A673 (cell line): ENCODE measurements at regions of chr21 and their contacts with region 1.

Region 1: GRCh38 chr21:42781971-42782722 is 97.2 kb downstream of the WDR4 start:
- DNase-seq: no peak
- H3K4me3 ChIP-seq: no peak overlapping the region
- H3K27ac ChIP-seq: no peak overlapping the region
- H3K4me1 ChIP-seq: peaks cover 8% of the 10 kb centered on the region
- H3K27me3 ChIP-seq: peaks cover 15% of the 10 kb centered on the region
- CTCF ChIP-seq: no peak

Region 2: DNA sequence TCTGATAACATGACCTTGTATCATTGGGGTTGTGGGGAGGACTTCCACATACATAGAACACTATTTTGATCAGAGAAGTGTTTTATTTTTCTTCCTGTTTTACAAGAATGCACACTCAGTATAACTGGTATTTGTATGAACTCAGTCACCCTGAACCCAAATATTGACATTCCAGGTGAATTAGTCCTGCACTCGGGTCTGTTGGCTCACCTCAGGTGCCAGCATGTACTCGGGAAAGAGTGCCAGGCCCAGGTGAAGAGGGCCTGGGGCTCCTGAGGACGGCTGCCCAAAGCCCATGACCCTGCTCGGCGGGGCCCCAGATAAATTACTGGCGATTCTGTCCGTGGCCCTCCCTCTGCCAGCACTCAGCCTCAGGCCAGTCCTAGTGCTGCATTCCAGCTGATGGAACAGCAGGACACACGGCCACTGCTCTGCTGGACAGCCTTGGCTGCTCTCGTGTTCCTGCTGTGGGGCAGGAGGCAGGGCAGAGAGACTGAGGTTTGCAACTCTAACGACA is 1198.8 kb before region 1 on chr21:
- CTCF ChIA-PET with region 1: no interaction called
- POLR2A ChIA-PET with region 1: no interaction called
- intact Hi-C with region 1: no loop called
- DNase-seq: no peak
- H3K4me3 ChIP-seq: no peak overlapping the region
- H3K27ac ChIP-seq: no peak overlapping the region
- H3K4me1 ChIP-seq: no peaks in the 10 kb centered on the region
- H3K27me3 ChIP-seq: no peaks in the 10 kb centered on the region
- CTCF ChIP-seq: no peak

Region 3: GRCh38 chr21:42537106-42537742 is 244.9 kb before region 1 on chr21:
- CTCF ChIA-PET with region 1: no interaction called
- POLR2A ChIA-PET with region 1: no interaction called
- intact Hi-C with region 1: no loop called
- DNase-seq: peak; percentile 53
- H3K4me3 ChIP-seq: no peak overlapping the region
- H3K27ac ChIP-seq: no peak overlapping the region
- H3K4me1 ChIP-seq: peaks cover 29% of the 10 kb centered on the region
- H3K27me3 ChIP-seq: no peaks in the 10 kb centered on the region
- CTCF ChIP-seq: peak; percentile 58

Region 4: GRCh38 chr21:42627527-42628289 is 154.4 kb before region 1 on chr21:
- CTCF ChIA-PET with region 1: no interaction called
- POLR2A ChIA-PET with region 1: no interaction called
- intact Hi-C with region 1: no loop called
- DNase-seq: no peak
- H3K4me3 ChIP-seq: no peak overlapping the region
- H3K27ac ChIP-seq: no peak overlapping the region
- H3K4me1 ChIP-seq: no peaks in the 10 kb centered on the region
- H3K27me3 ChIP-seq: no peaks in the 10 kb centered on the region
- CTCF ChIP-seq: no peak

Region 5: GRCh38 chr21:42677339-42678321 is 104.5 kb before region 1 on chr21:
- CTCF ChIA-PET with region 1: no interaction called
- POLR2A ChIA-PET with region 1: no interaction called
- intact Hi-C with region 1: no loop called
- DNase-seq: no peak
- H3K4me3 ChIP-seq: no peak overlapping the region
- H3K27ac ChIP-seq: no peak overlapping the region
- H3K4me1 ChIP-seq: peaks cover 34% of the 10 kb centered on the region
- H3K27me3 ChIP-seq: no peaks in the 10 kb centered on the region
- CTCF ChIP-seq: no peak

Region 6: DNA sequence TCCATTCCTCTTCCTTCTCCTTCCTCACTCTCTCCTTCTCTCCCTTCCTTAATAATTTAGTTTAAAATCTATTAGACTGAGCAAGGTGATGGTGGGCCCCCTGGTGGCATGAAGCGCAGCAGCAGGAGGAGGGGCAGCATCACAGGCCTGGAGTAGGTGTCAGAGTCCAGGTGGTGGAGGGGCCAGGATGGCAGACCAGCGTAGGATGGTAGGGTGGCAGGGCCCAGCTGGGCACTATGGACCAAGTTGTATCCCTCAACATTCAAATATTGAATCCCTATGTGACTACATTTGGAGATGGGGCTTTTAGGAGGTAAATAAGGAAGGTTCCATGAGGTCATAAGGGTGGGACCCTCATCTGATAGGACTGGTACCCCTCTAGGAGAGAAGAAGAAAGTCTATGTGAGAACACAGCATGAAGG is 36.2 kb after region 1 on chr21:
- CTCF ChIA-PET with region 1: interaction called, 13 read pairs
- POLR2A ChIA-PET with region 1: no interaction called
- intact Hi-C with region 1: no loop called
- DNase-seq: peak; percentile 59
- H3K4me3 ChIP-seq: no peak overlapping the region
- H3K27ac ChIP-seq: no peak overlapping the region
- H3K4me1 ChIP-seq: peaks cover 12% of the 10 kb centered on the region
- H3K27me3 ChIP-seq: no peaks in the 10 kb centered on the region
- CTCF ChIP-seq: peak; percentile 94